Activated T-helper 1 cell treated with anti-CD3 and anti-CD28 coated beads, Interleukin-12 subunit alpha, Interleukin-12 subunit beta, Interleukin-2, Interleukin-4 antibody, amounts not matched to agents 30 ng/mL and 10 ng/mL and 1 ng/mL, durations not matched to agents 14 hours and 24 hours and 36 hours (primary cell): ENCODE measurements at regions of chr6 and their contacts with region 1.

Region 1: DNA sequence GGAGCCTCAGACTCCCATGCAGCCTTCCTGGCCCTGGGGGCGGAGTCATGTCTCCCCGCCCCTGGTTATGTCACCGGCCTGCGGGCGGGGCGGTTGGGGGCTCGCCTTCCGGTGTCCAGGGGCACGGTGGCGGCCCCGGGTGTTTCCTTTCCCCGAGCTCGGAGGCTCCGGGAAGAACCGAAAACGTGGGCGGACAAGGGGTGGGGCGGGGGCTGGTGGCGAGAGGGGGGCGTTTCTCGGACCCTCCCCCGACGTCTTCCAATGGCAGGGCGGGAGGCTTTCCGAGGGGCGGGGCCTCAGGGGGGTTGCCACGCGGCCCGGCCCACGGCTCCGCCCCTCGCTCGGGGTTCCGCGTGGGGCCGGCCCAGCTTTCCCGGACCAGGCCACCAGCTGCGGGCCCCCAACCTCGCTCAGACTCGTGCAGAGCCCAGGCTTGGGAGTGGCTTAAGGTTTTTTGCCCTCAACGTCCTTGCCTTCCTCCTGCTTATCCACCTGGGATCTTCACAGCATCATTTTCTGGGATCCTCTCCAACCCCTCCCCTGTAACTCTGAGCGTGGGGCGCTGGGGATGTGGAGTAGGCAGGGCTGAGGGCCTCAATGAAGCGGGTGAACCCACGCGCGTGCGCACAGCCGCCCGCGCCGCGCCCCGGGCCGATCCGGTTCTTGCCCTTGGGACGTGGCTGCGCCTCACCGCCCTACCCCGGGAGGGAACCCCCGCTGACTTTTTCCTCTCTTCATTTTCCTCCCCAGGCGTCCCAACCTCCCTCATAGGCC is 2.1 kb upstream of the NRN1 start:
- DNase-seq: peak; percentile 54
- H3K4me3 Mint-ChIP-seq: peak overlapping the region; percentile 81
- H3K27ac Mint-ChIP-seq: peak overlapping the region; percentile 40
- H3K4me1 Mint-ChIP-seq: peaks cover 38% of the 10 kb centered on the region
- H3K27me3 Mint-ChIP-seq: peaks cover 70% of the 10 kb centered on the region

Region 2: DNA sequence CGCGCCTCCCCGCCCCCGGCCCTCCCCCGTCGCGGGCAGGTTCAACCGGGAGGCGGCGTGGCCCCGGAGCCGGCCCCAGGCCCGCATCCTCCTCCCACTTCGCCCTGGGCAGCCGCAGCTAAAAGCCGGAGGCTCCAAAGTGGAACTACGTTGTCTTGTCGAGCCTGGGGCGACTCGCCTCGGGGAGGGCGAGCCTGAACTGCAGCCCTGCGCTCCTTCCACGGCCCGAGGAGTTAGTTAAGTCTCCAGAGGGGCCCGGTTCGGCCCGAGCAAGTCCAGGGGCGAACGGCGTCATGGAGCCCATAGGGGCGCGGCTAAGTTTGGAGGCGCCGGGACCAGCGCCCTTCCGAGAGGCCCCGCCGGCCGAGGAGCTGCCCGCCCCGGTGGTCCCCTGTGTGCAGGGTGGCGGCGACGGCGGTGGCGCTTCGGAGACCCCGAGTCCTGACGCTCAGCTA is 923.6 kb before region 1 on chr6 and contains the start of gene PPP1R3G:
- intact Hi-C with region 1: loop called (anchors 10 kb)
- DNase-seq: no peak
- H3K4me3 Mint-ChIP-seq: peak within 1 kb of the TSS; percentile 81
- H3K27ac Mint-ChIP-seq: peak within 1 kb of the TSS; percentile 18
- H3K4me1 Mint-ChIP-seq: no peaks in the 10 kb centered on the region
- H3K27me3 Mint-ChIP-seq: peaks cover 43% of the 10 kb centered on the region
- total RNA-seq, gene PPP1R3G: not detected in 2 replicates

Region 3: DNA sequence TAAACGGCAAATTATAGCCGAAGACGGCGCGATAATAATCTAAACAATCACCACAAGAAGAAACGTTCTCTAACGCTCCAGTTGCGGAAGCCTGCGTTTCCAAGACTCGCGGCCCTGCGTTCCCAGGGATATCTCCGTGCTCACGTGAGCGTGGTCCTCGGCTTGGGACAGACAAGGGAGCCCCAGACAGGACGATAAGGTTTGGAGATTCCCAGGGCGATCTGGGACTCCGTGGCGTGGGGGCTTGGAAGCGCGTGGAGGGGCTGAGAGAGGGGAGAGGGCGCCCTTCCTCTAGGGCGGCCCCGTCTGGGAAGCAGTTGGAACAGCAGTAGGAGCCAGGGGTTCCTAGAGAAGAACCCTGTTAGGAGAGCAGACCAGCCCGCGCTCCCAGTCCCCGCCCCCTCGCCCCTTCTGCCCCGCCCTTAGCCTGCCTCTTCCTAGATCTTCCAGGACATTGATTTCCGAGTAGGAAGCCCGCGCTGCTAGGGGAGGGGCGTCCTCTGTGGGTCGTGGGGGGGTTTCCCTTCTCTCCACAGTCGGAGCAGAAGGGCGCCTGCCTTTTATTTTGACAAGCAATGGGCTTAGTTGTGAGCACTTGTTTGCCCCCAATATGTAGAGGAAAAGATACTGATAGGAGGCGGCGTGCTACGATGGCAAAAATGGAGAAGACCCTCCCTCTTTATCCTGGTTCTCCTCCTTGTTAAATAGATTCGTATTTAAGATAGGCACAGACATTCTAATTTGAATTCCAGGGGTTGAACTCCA is 12.7 kb before region 1 on chr6:
- intact Hi-C with region 1: loop called (anchors 1 kb)
- DNase-seq: no peak
- H3K4me3 Mint-ChIP-seq: peak overlapping the region; percentile 85
- H3K27ac Mint-ChIP-seq: peak overlapping the region; percentile 69
- H3K4me1 Mint-ChIP-seq: peaks cover 59% of the 10 kb centered on the region
- H3K27me3 Mint-ChIP-seq: peaks cover 88% of the 10 kb centered on the region

Region 4: DNA sequence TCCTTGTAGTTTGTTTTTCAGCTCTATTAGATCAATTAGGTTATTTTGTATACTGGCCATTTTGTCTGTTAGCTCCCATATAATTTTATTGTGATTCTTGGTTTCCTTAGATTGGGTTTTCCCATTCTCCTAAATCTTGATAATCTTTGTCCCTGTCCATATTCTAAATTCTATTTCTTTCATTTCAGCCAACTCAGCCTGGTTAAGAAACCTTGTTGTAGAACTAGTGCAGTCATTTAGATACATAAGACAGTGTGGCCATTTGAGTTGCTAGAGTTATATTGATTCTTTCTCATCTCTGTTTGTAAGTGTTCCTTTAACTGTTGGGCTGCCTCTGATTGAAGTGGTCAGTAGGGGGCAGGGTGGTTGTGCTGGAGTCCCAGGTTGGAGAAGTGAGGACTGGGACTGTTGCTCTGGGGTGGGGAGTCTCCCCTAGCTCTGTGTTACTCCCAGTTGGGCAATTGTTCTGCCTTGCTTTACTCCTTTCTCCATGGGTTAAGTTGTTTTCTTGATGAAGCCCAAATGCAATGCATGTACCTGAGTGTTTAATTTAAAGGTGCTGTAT is 96.7 kb after region 1 on chr6:
- intact Hi-C with region 1: no loop called
- DNase-seq: no peak
- H3K4me3 Mint-ChIP-seq: no peak overlapping the region
- H3K27ac Mint-ChIP-seq: no peak overlapping the region
- H3K4me1 Mint-ChIP-seq: no peaks in the 10 kb centered on the region
- H3K27me3 Mint-ChIP-seq: peaks cover 2% of the 10 kb centered on the region

Region 5: GRCh38 chr6:7541175-7542064 is 1532.6 kb after region 1 on chr6 and contains the start of gene DSP:
- intact Hi-C with region 1: loop called (anchors 5 kb)
- DNase-seq: peak; percentile 3
- H3K4me3 Mint-ChIP-seq: peak within 1 kb of the TSS; percentile 82
- H3K27ac Mint-ChIP-seq: no peak within 1 kb of the TSS
- H3K4me1 Mint-ChIP-seq: peaks cover 6% of the 10 kb centered on the region
- H3K27me3 Mint-ChIP-seq: peaks cover 73% of the 10 kb centered on the region
- total RNA-seq, gene DSP: not detected in 2 replicates